RWPE1 (cell line): ENCODE measurements at regions of chr1 and their contacts with region 1.

Region 1: GRCh38 chr1:46223472-46223943 is 20.4 kb downstream of the LURAP1 start:
- DNase-seq: peak; percentile 71
- H3K27ac ChIP-seq: peak overlapping the region; percentile 62
- CTCF ChIP-seq: peak; percentile 98

Region 2: GRCh38 chr1:46183088-46183842 is 40.2 kb before region 1 on chr1:
- CTCF ChIA-PET with region 1: interaction called, 26 read pairs
- POLR2A ChIA-PET with region 1: no interaction called
- DNase-seq: peak; percentile 96
- H3K27ac ChIP-seq: peak overlapping the region; percentile 98
- CTCF ChIP-seq: no peak

Region 3: DNA sequence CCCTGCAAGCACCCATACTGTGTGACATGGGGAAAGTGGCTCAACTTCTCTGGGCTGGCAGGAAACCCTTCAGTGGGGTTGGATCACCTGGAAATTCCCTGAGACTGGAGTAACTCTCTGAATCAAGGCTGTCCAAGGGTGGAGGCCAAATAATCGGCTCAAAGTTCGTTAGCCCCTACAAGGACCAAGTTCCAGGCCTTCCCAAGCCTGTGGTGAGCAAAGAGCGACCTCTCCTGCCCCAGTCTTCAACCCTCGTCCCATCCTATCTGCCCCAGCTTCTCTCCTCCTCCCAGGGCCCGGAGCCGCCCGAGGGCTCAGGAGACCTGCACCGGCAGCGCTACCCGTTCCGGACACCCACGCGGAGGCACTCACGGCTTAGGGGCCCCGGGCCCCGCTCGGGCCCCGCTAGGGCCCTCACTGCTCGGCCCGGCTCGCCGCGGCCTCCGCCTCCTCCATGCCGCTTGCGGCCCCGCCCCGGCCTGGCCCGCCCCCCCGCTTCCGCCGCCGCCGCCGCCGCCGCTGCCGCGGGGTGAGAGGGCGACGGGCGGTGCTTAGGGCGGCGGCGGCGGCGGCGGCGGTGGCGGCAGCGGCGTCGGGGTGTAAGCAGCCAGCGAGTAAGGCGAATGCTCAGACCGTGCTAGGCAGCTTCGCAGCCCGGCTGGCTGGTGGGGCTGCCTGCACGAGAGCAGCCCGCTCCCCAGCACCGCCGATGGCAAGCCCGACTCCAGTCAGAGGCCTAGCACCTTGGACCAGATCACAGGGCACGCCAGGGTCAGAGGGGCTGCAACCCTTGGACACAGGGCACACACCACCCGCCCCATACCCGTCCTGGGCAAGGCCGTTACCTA is 25.3 kb before region 1 on chr1 and contains the start of gene POMGNT1:
- CTCF ChIA-PET with region 1: interaction called, 18 read pairs
- POLR2A ChIA-PET with region 1: interaction called, 4 read pairs
- DNase-seq: peak; percentile 82
- H3K27ac ChIP-seq: peak within 1 kb of the TSS; percentile 87
- CTCF ChIP-seq: no peak; the same call in 1 of the 2 replicates

Region 4: GRCh38 chr1:46203738-46204405 is 19.6 kb before region 1 on chr1:
- CTCF ChIA-PET with region 1: interaction called, 18 read pairs
- POLR2A ChIA-PET with region 1: interaction called, 3 read pairs
- DNase-seq: no peak
- H3K27ac ChIP-seq: peak overlapping the region; percentile 82
- CTCF ChIP-seq: no peak

Region 5: DNA sequence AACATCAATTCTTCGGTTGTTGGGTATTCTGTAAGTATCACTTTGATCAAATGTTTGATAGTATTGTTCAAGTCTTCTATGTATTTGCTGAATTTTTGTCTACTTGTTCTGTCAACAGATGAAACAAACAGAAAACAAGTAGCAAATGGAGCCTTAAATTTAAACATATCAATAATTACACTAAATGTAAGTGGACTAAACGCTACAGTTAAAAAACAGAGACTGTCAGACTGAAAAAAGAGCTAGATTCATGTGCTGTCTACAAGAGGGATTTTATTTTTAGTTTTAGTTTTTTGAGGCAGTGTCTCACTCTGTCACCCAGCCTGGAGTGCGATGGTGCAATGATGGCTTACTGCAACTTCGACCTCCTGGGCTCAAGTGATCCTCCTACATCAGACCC is 13.4 kb after region 1 on chr1:
- CTCF ChIA-PET with region 1: interaction called, 10 read pairs
- POLR2A ChIA-PET with region 1: interaction called, 3 read pairs
- DNase-seq: no peak
- H3K27ac ChIP-seq: no peak overlapping the region
- CTCF ChIP-seq: no peak

Region 6: DNA sequence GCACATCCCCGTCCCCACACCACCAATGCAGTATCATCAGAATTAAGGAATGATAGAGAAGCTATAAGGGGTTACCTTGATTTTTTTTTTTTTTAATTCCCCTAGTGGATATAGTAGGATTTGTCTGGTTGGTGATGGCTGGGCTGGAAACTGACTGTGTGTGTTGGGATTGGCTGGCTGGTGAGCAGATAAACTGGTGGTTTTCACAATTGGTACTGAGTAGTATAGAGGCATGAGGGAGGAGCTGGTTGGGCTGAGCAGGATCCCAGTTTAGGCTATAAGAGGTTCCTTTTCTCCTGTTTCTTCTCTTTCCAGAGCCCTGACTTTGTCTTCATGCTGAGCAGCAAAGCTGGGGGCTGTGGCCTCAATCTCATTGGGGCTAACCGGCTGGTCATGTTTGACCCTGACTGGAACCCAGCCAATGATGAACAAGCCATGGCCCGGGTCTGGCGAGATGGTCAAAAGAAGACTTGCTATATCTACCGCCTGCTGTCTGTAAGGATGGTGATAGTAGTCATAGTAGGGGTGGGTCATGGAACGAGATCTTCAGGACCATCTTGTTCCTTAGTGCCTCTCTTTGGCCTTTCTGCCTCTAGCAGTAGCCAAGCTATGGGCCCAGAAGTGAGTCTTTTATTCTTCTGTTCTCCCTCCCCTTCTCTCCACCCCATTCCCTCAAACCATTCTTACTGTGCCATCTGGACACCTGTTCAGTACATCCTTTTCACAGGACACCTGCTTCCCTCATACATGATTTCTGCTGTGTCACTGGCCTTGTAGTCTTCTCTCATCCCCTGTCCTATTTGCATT is 50.9 kb after region 1 on chr1:
- CTCF ChIA-PET with region 1: no interaction called
- POLR2A ChIA-PET with region 1: no interaction called
- DNase-seq: no peak
- H3K27ac ChIP-seq: no peak overlapping the region
- CTCF ChIP-seq: no peak

Region 7: DNA sequence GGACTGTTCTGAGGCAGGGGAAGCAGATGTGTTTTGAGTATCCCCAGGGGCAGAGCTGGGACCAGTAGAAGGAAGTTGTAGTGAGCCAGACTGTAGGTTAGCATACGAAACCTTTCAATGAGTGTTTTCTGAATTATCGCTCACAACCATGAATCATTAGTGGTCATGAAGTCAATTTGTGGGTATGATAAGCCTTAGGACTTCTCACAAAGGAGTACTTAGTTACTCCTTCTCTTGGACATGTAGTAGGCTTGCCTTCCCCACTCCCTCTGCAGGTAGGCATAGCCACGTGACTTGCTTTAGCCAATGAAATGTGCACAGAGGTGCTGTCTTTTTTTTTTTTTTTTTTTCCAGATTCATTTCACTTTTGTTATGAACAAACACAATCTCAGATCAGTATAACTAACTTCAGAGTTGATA is 146.7 kb after region 1 on chr1:
- CTCF ChIA-PET with region 1: no interaction called
- POLR2A ChIA-PET with region 1: no interaction called
- DNase-seq: peak; percentile 30
- H3K27ac ChIP-seq: no peak overlapping the region
- CTCF ChIP-seq: no peak